ENCODE measurements at regions of chr1 and their contacts with region 1.

Region 1: GRCh38 chr1:8858888-8859706 is 19.4 kb downstream of the ENO1 start:
- DNase-seq: peak; percentile 60
- ATAC-seq: peak; percentile 3
- H3K4me3 ChIP-seq: no peak overlapping the region
- H3K27ac ChIP-seq: peak overlapping the region; percentile 75
- H3K4me1 ChIP-seq: peaks cover 99% of the 10 kb centered on the region
- H3K27me3 ChIP-seq: no peaks in the 10 kb centered on the region
- CTCF ChIP-seq: peak; percentile 69
- EP300 ChIP-seq: no peak
- POLR2A ChIP-seq: peak; percentile 33 to 64; a peak in 3 of 4 replicates
- RAD21 ChIP-seq: no peak

Region 2: GRCh38 chr1:8817406-8818324 is 41.4 kb before region 1 on chr1 and contains the start of gene RERE:
- CTCF ChIA-PET with region 1: no interaction called
- POLR2A ChIA-PET with region 1: interaction called, 4 read pairs
- in situ Hi-C with region 1: no loop called
- intact Hi-C with region 1: loop called (anchors 5 kb)
- DNase-seq: peak; percentile 84
- ATAC-seq: peak; percentile 96
- H3K4me3 ChIP-seq: peak within 1 kb of the TSS; percentile 89 to 95 (median 91)
- H3K27ac ChIP-seq: peak within 1 kb of the TSS; percentile 88
- H3K4me1 ChIP-seq: peaks cover 52% of the 10 kb centered on the region
- H3K27me3 ChIP-seq: no peaks in the 10 kb centered on the region; a peak in 1 of 5 replicates
- CTCF ChIP-seq: peak; percentile 22; the same call in 1 of the 2 replicates
- EP300 ChIP-seq: no peak
- POLR2A ChIP-seq: peak; percentile 80 to 94
- RAD21 ChIP-seq: no peak
- total RNA-seq, gene RERE: 18.6 and 21.9 TPM in 2 replicates

Region 3: DNA sequence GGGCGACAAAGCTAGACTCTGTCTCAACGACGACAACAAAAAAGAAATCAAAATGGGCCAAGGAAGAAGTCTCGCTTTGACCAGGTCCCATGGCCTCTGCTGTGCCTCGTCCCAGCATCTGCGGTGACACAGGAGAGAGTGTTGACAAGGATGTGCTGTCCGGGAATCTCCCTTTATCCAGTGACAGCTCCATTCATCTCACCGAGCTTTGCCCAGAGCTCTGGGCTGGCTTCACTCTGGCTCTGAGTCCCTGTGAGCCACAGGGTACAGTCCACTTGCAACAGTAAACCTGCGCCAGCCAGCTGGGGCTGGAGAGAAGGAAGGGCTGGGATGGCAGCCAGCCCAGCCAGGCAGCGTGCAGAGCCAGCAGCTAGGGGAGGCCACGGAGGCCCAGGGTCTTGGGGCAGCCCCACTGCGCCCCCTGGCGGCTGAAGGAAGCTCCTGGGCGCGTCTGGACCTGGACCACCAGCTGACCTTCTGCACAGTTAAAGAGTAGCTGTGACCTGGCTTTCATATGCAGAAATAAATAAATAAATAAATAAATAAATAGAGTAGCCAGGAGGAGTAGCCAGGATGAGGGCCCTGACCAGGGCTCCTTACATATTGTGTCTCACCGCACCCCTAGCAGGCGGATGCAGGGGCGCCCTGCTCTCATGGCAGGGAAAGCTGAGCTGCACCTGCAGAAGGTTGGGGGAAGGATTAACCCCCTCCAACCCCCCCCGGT is 10.3 kb before region 1 on chr1:
- CTCF ChIA-PET with region 1: no interaction called
- POLR2A ChIA-PET with region 1: interaction called, 17 read pairs
- in situ Hi-C with region 1: no loop called
- intact Hi-C with region 1: no loop called
- DNase-seq: peak; percentile 88
- ATAC-seq: peak; percentile 91
- H3K4me3 ChIP-seq: peak overlapping the region; percentile 6 to 58 (median 31); a peak in 5 of 6 replicates
- H3K27ac ChIP-seq: peak overlapping the region; percentile 39
- H3K4me1 ChIP-seq: peaks cover 67% of the 10 kb centered on the region
- H3K27me3 ChIP-seq: no peaks in the 10 kb centered on the region
- CTCF ChIP-seq: peak; percentile 94
- EP300 ChIP-seq: 0 out of 4 replicates have a peak, but pooled peaks of 1 of the 2 experiments have one; percentile 6
- POLR2A ChIP-seq: 0 out of 4 replicates have a peak, but pooled peaks of 1 of the 2 experiments have one; percentile 16
- RAD21 ChIP-seq: peak; percentile 98

Region 4: GRCh38 chr1:8873506-8874229 is 14.6 kb after region 1 on chr1:
- CTCF ChIA-PET with region 1: no interaction called
- POLR2A ChIA-PET with region 1: interaction called, 116 read pairs
- in situ Hi-C with region 1: no loop called
- intact Hi-C with region 1: no loop called
- DNase-seq: no peak
- ATAC-seq: no peak; the same call in 2 of the 3 replicates
- H3K4me3 ChIP-seq: peak overlapping the region; percentile 32 to 93 (median 93)
- H3K27ac ChIP-seq: peak overlapping the region; percentile 30
- H3K4me1 ChIP-seq: peaks cover 67% of the 10 kb centered on the region
- H3K27me3 ChIP-seq: peaks cover 0 to 2% of the 10 kb centered on the region in 2 experiments; a peak in 2 of 5 replicates
- CTCF ChIP-seq: no peak
- EP300 ChIP-seq: no peak
- POLR2A ChIP-seq: peak; percentile 29 to 43; a peak in 2 of 4 replicates
- RAD21 ChIP-seq: no peak

Region 5: DNA sequence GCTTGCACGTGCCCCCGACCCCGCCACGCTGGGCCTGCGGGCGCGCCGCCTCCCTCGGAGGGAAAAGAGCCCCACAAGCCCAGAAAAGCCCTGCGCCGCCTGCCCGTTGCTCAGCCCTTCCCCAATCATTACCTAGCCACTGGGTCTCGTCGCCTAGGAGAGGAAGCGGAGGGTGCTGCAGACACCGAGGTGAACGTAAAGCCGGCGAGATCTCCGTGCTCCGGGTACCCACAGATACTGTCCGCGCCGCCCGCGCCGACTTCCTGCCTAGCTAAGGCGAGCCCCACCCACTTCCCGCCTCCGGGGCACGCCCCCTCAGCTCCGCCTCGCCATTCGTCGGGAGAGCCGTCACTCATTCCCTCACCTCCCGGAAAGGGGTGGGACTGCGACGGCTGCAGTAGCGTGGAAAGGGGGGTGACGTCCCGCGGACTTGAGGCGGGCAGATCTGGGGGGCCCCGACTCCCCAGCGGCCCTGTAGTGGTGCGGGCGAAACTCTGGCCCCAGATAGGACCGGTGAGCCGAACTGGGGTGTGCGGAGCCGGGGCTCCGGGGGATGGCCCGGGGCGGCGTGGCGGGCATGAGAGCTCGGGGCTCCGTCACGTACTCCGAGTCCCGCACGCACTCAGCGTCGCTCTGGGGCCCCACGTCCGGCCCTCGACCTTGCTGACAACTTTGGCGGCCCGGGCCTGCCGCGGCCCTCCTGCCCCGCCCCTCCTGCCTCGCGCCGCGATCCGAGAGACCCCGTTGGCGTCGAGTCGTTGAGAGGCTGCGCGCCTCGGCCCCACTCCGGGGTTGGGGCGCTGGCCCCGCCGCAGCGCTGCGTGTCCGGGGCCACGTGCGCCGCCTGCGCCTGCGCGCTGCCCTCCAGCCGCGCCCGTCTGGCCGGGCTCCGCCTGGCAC is 19.6 kb after region 1 on chr1 and contains the start of gene ENO1:
- CTCF ChIA-PET with region 1: no interaction called
- POLR2A ChIA-PET with region 1: interaction called, 116 read pairs
- in situ Hi-C with region 1: no loop called
- intact Hi-C with region 1: no loop called
- DNase-seq: peak; percentile 89
- ATAC-seq: peak; percentile 84
- H3K4me3 ChIP-seq: peak within 1 kb of the TSS; percentile 70 to 93 (median 93)
- H3K27ac ChIP-seq: peak within 1 kb of the TSS; percentile 90
- H3K4me1 ChIP-seq: peaks cover 46% of the 10 kb centered on the region
- H3K27me3 ChIP-seq: peaks cover 0 to 2% of the 10 kb centered on the region in 2 experiments; a peak in 2 of 5 replicates
- CTCF ChIP-seq: no peak
- EP300 ChIP-seq: peak; percentile 10 to 55; a peak in 3 of 4 replicates
- POLR2A ChIP-seq: peak; percentile 97
- RAD21 ChIP-seq: peak; percentile 57
- total RNA-seq, gene ENO1: 1,559 and 2,216 TPM in 2 replicates

Region 6: DNA sequence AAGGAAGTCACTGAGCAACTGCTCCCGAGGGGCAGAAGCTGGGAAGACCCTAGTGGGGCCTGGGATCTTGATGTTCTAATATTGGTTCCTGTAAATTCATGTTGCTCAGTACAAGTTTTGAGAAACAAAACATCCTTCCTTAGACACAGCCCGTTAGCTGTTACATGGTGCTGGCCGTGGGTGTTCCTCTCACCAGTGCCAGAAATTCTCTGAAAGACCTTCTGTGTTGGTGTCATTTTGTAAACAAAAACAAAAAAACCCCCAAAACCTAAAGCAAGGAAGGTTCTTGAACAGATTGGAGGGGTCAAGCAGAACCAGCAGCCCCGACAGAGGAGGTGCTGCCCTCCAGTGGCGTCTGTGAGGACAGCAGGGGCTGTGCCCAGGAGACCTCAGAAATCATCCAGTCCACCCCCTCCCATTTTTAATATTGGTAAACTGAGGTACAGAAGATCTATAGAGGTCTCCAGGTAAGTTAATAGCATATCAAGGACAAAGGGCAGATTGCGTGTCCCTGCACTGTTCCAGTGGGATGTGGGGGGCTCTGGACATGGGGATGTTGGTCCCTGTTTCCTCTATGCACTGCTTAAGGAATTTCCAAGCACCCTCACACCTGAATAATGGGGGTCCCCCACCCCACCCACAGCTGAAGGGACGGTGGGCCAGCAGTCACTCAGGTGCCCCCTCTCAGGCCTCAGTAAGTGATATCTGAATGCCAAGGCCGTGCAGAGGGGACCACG is 129.0 kb after region 1 on chr1:
- CTCF ChIA-PET with region 1: no interaction called
- POLR2A ChIA-PET with region 1: interaction called, 4 read pairs
- in situ Hi-C with region 1: no loop called
- intact Hi-C with region 1: loop called (anchors 2 kb)
- DNase-seq: no peak
- ATAC-seq: peak; percentile 72
- H3K4me3 ChIP-seq: peak overlapping the region in 1 of 3 experiments; percentile 51; a peak in 1 of 6 replicates
- H3K27ac ChIP-seq: no peak overlapping the region
- H3K4me1 ChIP-seq: peaks cover 57% of the 10 kb centered on the region
- H3K27me3 ChIP-seq: peaks cover 0 to 8% of the 10 kb centered on the region in 2 experiments; a peak in 1 of 5 replicates
- CTCF ChIP-seq: peak; percentile 83
- EP300 ChIP-seq: no peak
- POLR2A ChIP-seq: no peak
- RAD21 ChIP-seq: 0 out of 2 replicates have a peak, but pooled peaks have one; percentile 37